Adrenal gland (tissue), 19 donors: ENCODE measurements at regions of chr13 and their contacts with region 1.

Region 1: DNA sequence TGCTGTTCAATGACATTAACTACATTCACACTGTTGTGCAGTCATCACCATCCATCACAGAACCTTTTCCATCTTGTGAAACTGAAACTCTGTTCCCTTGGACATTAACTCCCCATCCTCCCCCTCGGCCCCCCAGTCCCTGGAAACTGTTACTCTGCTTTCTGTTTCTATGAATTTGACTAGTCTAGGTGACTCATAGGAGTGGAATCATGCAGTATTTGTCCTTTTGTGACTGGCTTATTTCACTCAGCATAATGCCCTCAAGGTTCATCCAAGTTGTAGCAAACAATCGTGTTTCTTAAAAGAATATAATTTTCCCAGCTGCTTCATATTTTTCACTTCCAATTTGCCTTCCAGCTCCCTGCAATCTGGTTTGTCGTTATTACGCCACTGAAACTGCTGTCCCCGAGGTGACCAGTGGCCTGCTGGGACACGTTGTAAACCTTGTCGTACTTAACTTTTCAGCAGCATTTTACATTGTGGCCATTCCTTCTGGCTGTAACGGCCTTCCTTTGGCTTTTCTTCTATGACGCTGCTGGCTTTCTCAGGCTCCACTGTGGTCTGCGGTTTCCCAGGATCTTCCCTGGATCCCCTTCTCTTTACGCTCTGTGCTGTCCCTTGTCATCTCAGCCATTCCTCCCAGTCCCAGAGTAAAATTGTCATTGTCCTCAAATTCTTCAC is 74.0 kb downstream of the DHRS12 start:
- DNase-seq: peak; percentile 55 to 89 (median 77)
- H3K4me3 ChIP-seq: no peak overlapping the region
- H3K27ac ChIP-seq: peak overlapping the region; percentile 67 to 87 (median 76)
- H3K4me1 ChIP-seq: peaks cover 36 to 63% of the 10 kb centered on the region in 2 donors
- H3K27me3 ChIP-seq: no peaks in the 10 kb centered on the region
- CTCF ChIP-seq: no peak
- POLR2A ChIP-seq: peak in 1 of 2 donors; percentile 33

Region 2: GRCh38 chr13:51583875-51584730 is 145.9 kb before region 1 on chr13 and contains the start of gene WDFY2:
- intact Hi-C with region 1: loop called in 1 of 2 experiments (anchors 5 kb)
- DNase-seq: peak; percentile 100
- H3K4me3 ChIP-seq: peak within 1 kb of the TSS; percentile 38 to 95 (median 84)
- H3K27ac ChIP-seq: peak within 1 kb of the TSS; percentile 68 to 97 (median 82)
- H3K4me1 ChIP-seq: peaks cover 13 to 38% of the 10 kb centered on the region in 2 donors
- H3K27me3 ChIP-seq: no peaks in the 10 kb centered on the region
- CTCF ChIP-seq: peak in 4 of 6 experiments; percentile 21 to 41 (median 26)
- POLR2A ChIP-seq: peak; percentile 91 to 97
- total RNA-seq, gene WDFY2: 14.9 to 38.6 (median 30.2) TPM

Region 3: GRCh38 chr13:51590971-51591627 is 138.9 kb before region 1 on chr13:
- intact Hi-C with region 1: loop called (anchors 5 to 10 kb)
- DNase-seq: peak; percentile 67 to 89 (median 76)
- H3K4me3 ChIP-seq: peak overlapping the region in 1 of 4 donors; percentile 1
- H3K27ac ChIP-seq: peak overlapping the region; percentile 37 to 86 (median 76)
- H3K4me1 ChIP-seq: peaks cover 43 to 94% of the 10 kb centered on the region in 2 donors
- H3K27me3 ChIP-seq: no peaks in the 10 kb centered on the region
- CTCF ChIP-seq: no peak
- POLR2A ChIP-seq: peak in 1 of 2 donors; percentile 73